ENCODE measurements at regions of chr11 and their contacts with region 1.

Region 1: GRCh38 chr11:6603287-6604080 is at the starts of genes ILK and RRP8:
- DNase-seq: peak; percentile 90
- H3K4me3 ChIP-seq: peak within 1 kb of the TSS; percentile 80 to 92
- H3K27ac ChIP-seq: peak within 1 kb of the TSS; percentile 93 to 95
- H3K4me1 ChIP-seq: peaks cover 17% of the 10 kb centered on the region
- H3K27me3 ChIP-seq: no peaks in the 10 kb centered on the region
- CTCF ChIP-seq: peak in 2 of 4 experiments; percentile 33 to 43
- POLR2A ChIP-seq: peak; percentile 81
- total RNA-seq, gene ILK: 172 to 195 TPM
- total RNA-seq, gene RRP8: 16.4 to 16.6 TPM

Region 2: DNA sequence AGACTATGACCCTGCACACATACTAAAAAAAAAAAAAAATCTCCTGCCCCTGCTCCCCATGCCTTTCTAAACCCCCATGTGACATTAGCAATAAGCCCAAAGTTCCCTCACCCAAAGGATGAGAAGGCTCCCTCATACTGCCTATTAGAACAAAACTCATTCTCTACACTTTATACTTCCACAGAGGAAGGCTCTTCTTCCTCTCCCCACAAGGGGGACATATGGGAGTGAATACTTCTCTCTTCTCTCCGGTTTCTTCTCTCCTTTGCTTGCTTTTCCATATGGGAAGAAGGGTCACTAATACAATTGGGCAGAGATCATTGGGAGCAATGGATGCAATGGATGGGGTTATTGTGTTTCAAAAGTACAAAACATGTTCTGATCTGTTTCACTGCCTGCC is 620.0 kb before region 1 on chr11:
- intact Hi-C with region 1: no loop called
- DNase-seq: no peak
- H3K4me3 ChIP-seq: no peak overlapping the region
- H3K27ac ChIP-seq: no peak overlapping the region
- H3K4me1 ChIP-seq: no peaks in the 10 kb centered on the region
- H3K27me3 ChIP-seq: no peaks in the 10 kb centered on the region
- CTCF ChIP-seq: no peak
- POLR2A ChIP-seq: no peak

Region 3: GRCh38 chr11:6481012-6481923 is 122.2 kb before region 1 on chr11 and contains the starts of genes ARFIP2 and TIMM10B:
- intact Hi-C with region 1: loop called (anchors 5 kb)
- DNase-seq: peak; percentile 99
- H3K4me3 ChIP-seq: peak within 1 kb of the TSS; percentile 62 to 75
- H3K27ac ChIP-seq: peak within 1 kb of the TSS; percentile 94
- H3K4me1 ChIP-seq: peaks cover 16% of the 10 kb centered on the region
- H3K27me3 ChIP-seq: no peaks in the 10 kb centered on the region
- CTCF ChIP-seq: peak in 1 of 4 experiments; percentile 25
- POLR2A ChIP-seq: peak; percentile 90
- total RNA-seq, gene ARFIP2: 87.3 to 110 TPM
- total RNA-seq, gene TIMM10B: 29.4 to 35.6 TPM

Region 4: GRCh38 chr11:6655020-6655789 is 51.7 kb after region 1 on chr11:
- intact Hi-C with region 1: loop called (anchors 5 kb)
- DNase-seq: no peak
- H3K4me3 ChIP-seq: peak overlapping the region; percentile 35 to 43
- H3K27ac ChIP-seq: peak overlapping the region; percentile 27 to 52
- H3K4me1 ChIP-seq: no peaks in the 10 kb centered on the region
- H3K27me3 ChIP-seq: no peaks in the 10 kb centered on the region
- CTCF ChIP-seq: no peak
- POLR2A ChIP-seq: no peak